Activated naive CD4-positive, alpha-beta T cell treated with anti-CD3 and anti-CD28 coated beads for 36 hours (primary cell): ENCODE measurements at regions of chr11 and their contacts with region 1.

Region 1: DNA sequence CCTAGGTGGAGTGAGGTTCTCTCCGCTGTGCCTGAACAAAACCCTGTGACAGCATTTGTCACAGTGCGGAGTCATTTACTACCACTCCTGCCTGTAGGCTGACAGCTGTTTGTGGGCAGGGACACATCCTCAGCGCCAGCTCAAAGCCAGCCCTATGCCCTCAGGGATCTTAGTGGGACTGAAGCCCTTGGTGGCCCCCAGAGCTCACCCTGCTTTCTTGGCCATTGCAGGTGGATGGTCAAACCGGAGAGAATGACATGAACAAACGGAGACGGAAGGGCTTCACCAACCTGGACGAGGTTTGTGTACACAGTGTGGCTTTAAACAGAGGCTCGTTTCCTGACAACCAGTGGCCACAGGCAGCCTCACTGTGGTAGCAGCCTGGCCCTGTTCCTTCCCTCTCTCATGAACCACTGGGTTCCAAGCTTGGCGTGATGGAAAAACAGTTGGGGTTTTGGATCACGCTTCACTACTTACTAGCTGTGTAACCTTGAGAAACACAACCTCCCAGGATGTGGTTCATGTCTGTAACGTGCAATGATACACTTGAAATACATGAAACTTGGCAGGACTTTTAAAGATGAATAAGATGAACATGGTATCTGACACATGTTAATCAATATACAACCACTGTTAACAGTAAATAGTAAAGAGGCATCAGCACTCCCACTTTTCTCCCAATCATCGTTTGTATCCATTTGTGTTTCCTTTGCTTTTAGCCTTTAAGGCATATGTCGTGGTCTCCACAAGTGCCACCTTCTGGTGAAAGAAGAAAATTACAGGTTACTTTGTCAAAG is 125.8 kb downstream of the MICAL2 start:
- DNase-seq: peak; percentile 72
- H3K4me3 Mint-ChIP-seq: no peak overlapping the region
- H3K27ac Mint-ChIP-seq: peak overlapping the region; percentile 72
- H3K4me1 Mint-ChIP-seq: peaks cover 19% of the 10 kb centered on the region
- H3K27me3 Mint-ChIP-seq: no peaks in the 10 kb centered on the region

Region 2: GRCh38 chr11:11577251-11577855 is 658.8 kb before region 1 on chr11:
- CTCF ChIA-PET with region 1: no interaction called
- intact Hi-C with region 1: no loop called
- DNase-seq: no peak
- H3K4me3 Mint-ChIP-seq: no peak overlapping the region
- H3K27ac Mint-ChIP-seq: no peak overlapping the region
- H3K4me1 Mint-ChIP-seq: no peaks in the 10 kb centered on the region
- H3K27me3 Mint-ChIP-seq: no peaks in the 10 kb centered on the region

Region 3: DNA sequence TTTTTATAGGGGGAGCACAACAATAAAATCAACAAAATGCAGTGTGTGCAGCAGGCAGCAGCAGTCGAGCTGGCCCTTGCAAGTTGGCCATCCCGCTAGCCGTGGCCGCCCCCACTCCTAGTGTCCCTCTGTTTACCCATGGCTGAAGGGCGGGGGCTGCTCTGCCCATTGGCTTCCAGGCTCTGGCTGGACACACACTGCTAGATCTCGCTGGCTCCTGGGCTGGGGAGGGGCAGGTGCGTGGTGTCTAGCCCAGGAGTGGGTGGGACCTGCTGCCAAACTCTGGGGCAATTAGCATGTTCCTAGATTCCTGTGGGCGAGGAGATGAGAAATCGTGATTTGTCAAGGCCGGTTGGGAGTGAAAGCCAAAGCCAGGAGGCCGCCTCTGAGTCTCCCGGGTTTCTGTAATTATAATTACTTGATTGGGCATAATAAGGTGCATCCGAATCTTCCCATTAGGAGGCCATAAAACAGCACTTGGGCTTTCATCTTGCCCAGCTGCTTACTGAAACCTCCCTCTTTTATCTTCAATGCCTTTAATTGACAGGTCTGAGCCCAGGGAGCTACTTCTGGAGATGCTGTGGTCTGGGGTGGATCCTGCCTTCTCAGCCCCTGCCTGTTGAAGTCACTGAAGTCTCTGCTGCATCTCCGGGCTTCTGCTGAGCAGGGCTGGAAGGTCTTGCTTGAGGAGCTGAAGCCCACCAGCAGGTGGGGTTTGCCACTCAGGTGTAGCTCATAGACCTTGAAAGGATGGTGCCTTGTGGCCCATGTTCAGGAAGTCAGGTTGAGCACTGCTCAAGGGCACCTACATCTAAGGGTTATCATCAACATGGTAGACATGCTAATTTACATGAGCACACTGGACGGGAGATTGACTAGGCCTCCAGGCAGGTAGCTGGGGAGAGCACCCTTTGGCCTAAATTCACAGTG is 183.2 kb before region 1 on chr11:
- CTCF ChIA-PET with region 1: interaction called, 37 read pairs
- intact Hi-C with region 1: loop called (anchors 1 kb)
- DNase-seq: peak; percentile 52
- H3K4me3 Mint-ChIP-seq: no peak overlapping the region
- H3K27ac Mint-ChIP-seq: no peak overlapping the region
- H3K4me1 Mint-ChIP-seq: no peaks in the 10 kb centered on the region
- H3K27me3 Mint-ChIP-seq: no peaks in the 10 kb centered on the region

Region 4: DNA sequence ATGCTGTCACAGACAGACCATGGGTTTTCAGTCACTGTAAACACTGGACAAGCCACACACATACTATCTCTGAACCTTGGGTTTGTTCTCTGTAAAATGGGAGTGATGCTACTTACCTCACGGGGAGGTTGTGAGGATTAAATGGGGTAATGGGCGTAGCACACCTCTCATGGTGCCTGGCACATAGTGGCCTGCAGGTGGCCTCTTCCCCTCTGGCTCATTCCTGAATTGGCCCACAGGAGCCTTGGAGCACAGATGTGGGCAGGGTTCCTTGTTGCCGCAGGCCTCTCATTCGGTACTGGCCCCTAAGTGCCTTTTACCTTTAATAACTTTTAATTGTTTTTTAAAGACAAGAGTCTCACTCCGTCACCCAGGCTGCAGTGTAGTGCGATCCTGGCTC is 114.1 kb before region 1 on chr11:
- CTCF ChIA-PET with region 1: interaction called, 6 read pairs
- intact Hi-C with region 1: loop called (anchors 1 kb)
- DNase-seq: no peak
- H3K4me3 Mint-ChIP-seq: no peak overlapping the region
- H3K27ac Mint-ChIP-seq: no peak overlapping the region
- H3K4me1 Mint-ChIP-seq: peaks cover 45% of the 10 kb centered on the region
- H3K27me3 Mint-ChIP-seq: no peaks in the 10 kb centered on the region

Region 5: GRCh38 chr11:12167098-12168000 is 68.8 kb before region 1 on chr11:
- CTCF ChIA-PET with region 1: interaction called, 20 read pairs
- intact Hi-C with region 1: no loop called
- DNase-seq: peak; percentile 62
- H3K4me3 Mint-ChIP-seq: no peak overlapping the region
- H3K27ac Mint-ChIP-seq: peak overlapping the region; percentile 57
- H3K4me1 Mint-ChIP-seq: peaks cover 24% of the 10 kb centered on the region
- H3K27me3 Mint-ChIP-seq: no peaks in the 10 kb centered on the region

Region 6: GRCh38 chr11:12207384-12208150 is 28.6 kb before region 1 on chr11:
- CTCF ChIA-PET with region 1: interaction called, 13 read pairs
- intact Hi-C with region 1: loop called (anchors 1 kb)
- DNase-seq: peak; percentile 73
- H3K4me3 Mint-ChIP-seq: no peak overlapping the region
- H3K27ac Mint-ChIP-seq: peak overlapping the region; percentile 77
- H3K4me1 Mint-ChIP-seq: peaks cover 53% of the 10 kb centered on the region
- H3K27me3 Mint-ChIP-seq: no peaks in the 10 kb centered on the region